ENCODE measurements at regions of chr3 and their contacts with region 1.

Region 1: DNA sequence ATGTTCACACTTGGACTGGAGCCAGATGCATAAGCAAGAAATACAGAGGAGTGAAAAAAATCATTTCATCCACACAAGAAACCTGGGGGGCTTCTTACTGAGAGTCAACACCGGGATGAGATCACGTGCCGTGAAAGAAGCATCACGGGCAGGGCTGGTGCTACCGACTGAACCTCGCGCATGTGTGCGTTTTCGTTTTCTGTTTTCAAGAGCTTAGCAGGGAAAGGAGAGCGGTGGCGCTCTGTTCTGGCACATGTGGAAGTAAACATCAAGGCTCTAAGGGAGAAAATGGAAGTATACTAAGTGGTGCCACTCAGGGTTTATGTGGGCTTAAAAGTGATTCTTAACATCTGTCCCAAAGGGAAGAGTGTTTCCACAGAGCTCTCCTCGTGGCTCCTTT is 55.9 kb downstream of the VGLL4 start:
- DNase-seq: no peak
- ATAC-seq: no peak
- H3K4me3 ChIP-seq: no peak overlapping the region
- H3K4me3 Mint-ChIP-seq: peak overlapping the region in 1 of 10 donors; percentile 8
- H3K27ac ChIP-seq: no peak overlapping the region
- H3K27ac Mint-ChIP-seq: peak overlapping the region in 7 of 9 donors; percentile 11 to 83 (median 60)
- H3K4me1 ChIP-seq: peaks cover 0 to 14% of the 10 kb centered on the region in 2 donors
- H3K4me1 Mint-ChIP-seq: peaks cover 38 to 92% (median 88%) of the 10 kb centered on the region in 7 donors
- H3K27me3 ChIP-seq: no peaks in the 10 kb centered on the region
- H3K27me3 Mint-ChIP-seq: no peaks in the 10 kb centered on the region

Region 2: DNA sequence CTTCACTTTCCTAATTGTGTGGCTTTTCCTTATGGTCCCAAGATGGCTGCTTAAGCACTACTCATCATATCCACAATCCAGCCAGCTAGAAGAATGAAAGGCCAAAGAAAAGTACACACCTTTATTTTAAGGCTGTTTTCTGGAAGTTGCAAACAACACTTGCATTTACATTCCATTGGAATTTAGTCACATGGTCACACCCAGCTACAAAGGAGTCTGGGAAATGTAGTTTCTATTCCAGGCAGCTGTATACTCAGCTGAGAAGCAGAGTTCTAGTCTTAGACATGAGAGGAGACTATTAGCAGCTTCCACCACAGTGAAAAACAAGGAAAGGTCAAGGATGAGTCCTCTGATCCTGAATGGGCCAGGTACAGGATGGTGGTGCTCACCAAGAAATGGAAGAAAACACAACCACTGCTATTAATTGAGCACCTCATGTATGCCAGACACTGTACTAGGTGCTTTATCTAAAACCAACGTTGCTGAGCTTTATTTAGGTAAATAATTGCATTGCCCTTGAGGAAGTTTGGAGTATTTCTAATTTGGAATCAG is 343.6 kb before region 1 on chr3:
- CTCF ChIA-PET with region 1: no interaction called
- POLR2A ChIA-PET with region 1: no interaction called
- intact Hi-C with region 1: no loop called
- DNase-seq: no peak
- ATAC-seq: no peak
- H3K4me3 ChIP-seq: no peak overlapping the region
- H3K4me3 Mint-ChIP-seq: no peak overlapping the region
- H3K27ac ChIP-seq: no peak overlapping the region
- H3K27ac Mint-ChIP-seq: no peak overlapping the region
- H3K4me1 ChIP-seq: no peaks in the 10 kb centered on the region
- H3K4me1 Mint-ChIP-seq: peaks cover 0 to 3% (median 0%) of the 10 kb centered on the region in 7 donors
- H3K27me3 ChIP-seq: no peaks in the 10 kb centered on the region
- H3K27me3 Mint-ChIP-seq: peaks cover 0 to 5% (median under 1%) of the 10 kb centered on the region in 5 donors

Region 3: DNA sequence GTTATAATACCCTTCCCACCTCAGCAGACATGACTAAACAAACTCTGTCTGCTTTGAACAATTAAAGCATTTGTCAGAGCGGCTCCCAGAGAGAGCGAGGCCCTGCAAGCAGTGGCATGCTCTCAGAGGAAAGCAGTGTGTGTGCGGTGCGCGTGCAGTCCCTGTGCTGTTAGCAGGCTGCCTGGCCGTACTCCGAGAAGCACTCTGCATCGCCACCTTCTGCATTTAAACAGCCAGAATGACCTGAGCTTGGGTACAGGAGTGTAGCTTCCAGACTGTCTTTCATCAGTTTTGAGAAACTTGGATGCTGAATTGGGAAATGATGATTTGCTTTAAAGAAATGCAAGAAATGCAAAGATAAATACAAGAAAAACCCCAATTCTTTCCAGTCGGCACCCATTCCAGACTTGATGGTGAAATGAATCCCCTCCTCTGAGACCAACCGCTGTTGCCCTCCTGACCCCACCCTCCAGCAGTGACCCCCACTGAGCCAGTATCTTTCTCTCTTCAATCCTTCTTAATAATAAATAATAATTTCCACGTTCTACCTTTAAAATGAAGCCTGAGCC is 57.5 kb before region 1 on chr3:
- CTCF ChIA-PET with region 1: no interaction called
- POLR2A ChIA-PET with region 1: no interaction called
- intact Hi-C with region 1: no loop called
- DNase-seq: no peak
- ATAC-seq: no peak
- H3K4me3 ChIP-seq: no peak overlapping the region
- H3K4me3 Mint-ChIP-seq: no peak overlapping the region
- H3K27ac ChIP-seq: no peak overlapping the region
- H3K27ac Mint-ChIP-seq: no peak overlapping the region
- H3K4me1 ChIP-seq: no peaks in the 10 kb centered on the region
- H3K4me1 Mint-ChIP-seq: peaks cover 0 to 5% (median 3%) of the 10 kb centered on the region in 7 donors
- H3K27me3 ChIP-seq: no peaks in the 10 kb centered on the region
- H3K27me3 Mint-ChIP-seq: no peaks in the 10 kb centered on the region

Region 4: GRCh38 chr3:11568503-11569155 is 19.1 kb before region 1 on chr3:
- CTCF ChIA-PET with region 1: no interaction called
- POLR2A ChIA-PET with region 1: no interaction called
- intact Hi-C with region 1: loop called in 1 of 2 experiments (anchors 1 kb)
- DNase-seq: no peak
- ATAC-seq: no peak
- H3K4me3 ChIP-seq: no peak overlapping the region
- H3K4me3 Mint-ChIP-seq: no peak overlapping the region
- H3K27ac ChIP-seq: no peak overlapping the region
- H3K27ac Mint-ChIP-seq: peak overlapping the region in 4 of 9 donors; percentile 35 to 72 (median 49)
- H3K4me1 ChIP-seq: no peaks in the 10 kb centered on the region
- H3K4me1 Mint-ChIP-seq: peaks cover 3 to 30% (median 18%) of the 10 kb centered on the region in 7 donors
- H3K27me3 ChIP-seq: no peaks in the 10 kb centered on the region
- H3K27me3 Mint-ChIP-seq: no peaks in the 10 kb centered on the region

Region 5: GRCh38 chr3:11610044-11610671 is 22.4 kb after region 1 on chr3:
- CTCF ChIA-PET with region 1: no interaction called
- POLR2A ChIA-PET with region 1: no interaction called
- intact Hi-C with region 1: no loop called
- DNase-seq: no peak
- ATAC-seq: peak; percentile 36
- H3K4me3 ChIP-seq: no peak overlapping the region
- H3K4me3 Mint-ChIP-seq: peak overlapping the region in 1 of 10 donors; percentile 37
- H3K27ac ChIP-seq: no peak overlapping the region
- H3K27ac Mint-ChIP-seq: peak overlapping the region in 3 of 9 donors; percentile 15 to 72 (median 31)
- H3K4me1 ChIP-seq: no peaks in the 10 kb centered on the region
- H3K4me1 Mint-ChIP-seq: peaks cover 33 to 97% (median 88%) of the 10 kb centered on the region in 7 donors
- H3K27me3 ChIP-seq: no peaks in the 10 kb centered on the region
- H3K27me3 Mint-ChIP-seq: no peaks in the 10 kb centered on the region

Region 6: DNA sequence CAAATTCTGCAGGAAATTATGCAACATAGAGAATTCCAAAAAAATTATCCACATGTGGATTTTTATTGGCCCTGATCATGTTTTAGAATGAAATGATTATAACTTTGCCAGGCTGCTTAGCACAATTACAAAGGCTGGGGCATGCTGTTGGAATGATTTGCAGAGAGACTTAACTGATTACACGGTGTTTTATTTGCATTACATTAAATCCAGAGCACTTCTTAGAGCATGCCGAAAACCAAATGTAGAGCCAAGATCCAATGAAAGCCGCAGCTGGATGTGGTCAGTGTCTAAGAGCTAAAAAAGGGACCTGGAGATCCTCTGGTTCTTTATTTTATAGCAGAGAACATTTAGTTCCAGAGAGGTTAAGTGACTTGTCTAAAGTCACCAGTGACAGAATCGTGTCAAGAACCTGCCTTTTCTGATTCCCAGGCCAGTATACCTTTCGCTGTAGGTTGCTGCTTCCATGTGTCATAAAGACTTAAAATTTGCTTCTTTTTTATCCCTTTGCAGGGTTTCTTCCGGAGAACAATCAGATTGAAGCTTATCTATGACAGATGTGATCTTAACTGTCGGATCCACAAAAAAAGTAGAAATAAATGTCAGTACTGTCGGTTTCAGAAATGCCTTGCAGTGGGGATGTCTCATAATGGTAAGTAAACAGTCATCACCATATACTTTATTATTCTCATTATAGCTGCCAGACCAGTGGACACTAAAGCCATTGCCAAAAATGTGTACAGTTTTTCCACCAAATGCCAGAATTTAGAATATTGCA is 804.5 kb after region 1 on chr3:
- CTCF ChIA-PET with region 1: no interaction called
- POLR2A ChIA-PET with region 1: no interaction called
- intact Hi-C with region 1: no loop called
- DNase-seq: no peak
- ATAC-seq: no peak
- H3K4me3 ChIP-seq: no peak overlapping the region
- H3K4me3 Mint-ChIP-seq: no peak overlapping the region
- H3K27ac ChIP-seq: no peak overlapping the region
- H3K27ac Mint-ChIP-seq: no peak overlapping the region
- H3K4me1 ChIP-seq: no peaks in the 10 kb centered on the region
- H3K4me1 Mint-ChIP-seq: peaks cover 0 to 15% (median 0%) of the 10 kb centered on the region in 7 donors
- H3K27me3 ChIP-seq: no peaks in the 10 kb centered on the region
- H3K27me3 Mint-ChIP-seq: peaks cover 15 to 37% (median 22%) of the 10 kb centered on the region in 5 donors

Measured in naive thymus-derived CD4-positive, alpha-beta T cell (primary cell).